ENCODE measurements at regions of chr22 and their contacts with region 1.

Region 1: GRCh38 chr22:38296374-38296773 is 20.9 kb downstream of the CSNK1E start:
- DNase-seq: no peak
- H3K27ac ChIP-seq: peak overlapping the region; percentile 98
- CTCF ChIP-seq: no peak

Region 2: GRCh38 chr22:38176170-38176741 is 120.1 kb before region 1 on chr22:
- CTCF ChIA-PET with region 1: no interaction called
- POLR2A ChIA-PET with region 1: no interaction called
- DNase-seq: no peak
- H3K27ac ChIP-seq: peak overlapping the region; percentile 90
- CTCF ChIP-seq: no peak

Region 3: DNA sequence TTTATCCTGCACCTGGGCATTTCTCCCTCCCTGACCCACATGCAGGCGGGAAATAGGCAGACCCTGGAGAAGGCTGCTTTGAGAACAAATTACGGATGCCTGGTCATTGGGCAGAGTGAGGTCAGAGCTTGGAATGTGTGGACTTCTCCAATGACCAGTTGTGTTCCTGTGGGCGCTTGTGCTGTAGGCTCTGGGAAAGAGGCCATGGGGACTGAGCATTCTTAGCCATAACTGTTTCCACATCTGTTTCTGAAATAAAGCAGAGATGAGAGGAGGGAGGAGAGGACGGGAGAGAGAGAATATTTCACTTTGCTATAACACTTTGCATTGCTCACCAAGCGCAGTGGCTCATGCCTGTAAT is 12.4 kb before region 1 on chr22:
- CTCF ChIA-PET with region 1: interaction called, 11 read pairs
- POLR2A ChIA-PET with region 1: no interaction called
- DNase-seq: no peak
- H3K27ac ChIP-seq: peak overlapping the region; percentile 84
- CTCF ChIP-seq: no peak

Region 4: GRCh38 chr22:38347897-38348750 is 51.8 kb after region 1 on chr22:
- CTCF ChIA-PET with region 1: no interaction called
- POLR2A ChIA-PET with region 1: no interaction called
- DNase-seq: peak; percentile 79
- H3K27ac ChIP-seq: peak overlapping the region; percentile 23
- CTCF ChIP-seq: no peak

Measured in RWPE1 (cell line).